ENCODE measurements at regions of chr17 and their contacts with region 1.

Region 1: GRCh38 chr17:39980351-39981206 is at the start of gene PSMD3:
- DNase-seq: peak; percentile 99
- ATAC-seq: peak; percentile 98
- H3K4me3 Mint-ChIP-seq: peak within 1 kb of the TSS; percentile 94
- H3K27ac Mint-ChIP-seq: peak within 1 kb of the TSS; percentile 90
- H3K4me1 Mint-ChIP-seq: peaks cover 31% of the 10 kb centered on the region
- H3K27me3 Mint-ChIP-seq: peaks cover 4% of the 10 kb centered on the region
- total RNA-seq, gene PSMD3: 141 to 146 TPM

Region 2: DNA sequence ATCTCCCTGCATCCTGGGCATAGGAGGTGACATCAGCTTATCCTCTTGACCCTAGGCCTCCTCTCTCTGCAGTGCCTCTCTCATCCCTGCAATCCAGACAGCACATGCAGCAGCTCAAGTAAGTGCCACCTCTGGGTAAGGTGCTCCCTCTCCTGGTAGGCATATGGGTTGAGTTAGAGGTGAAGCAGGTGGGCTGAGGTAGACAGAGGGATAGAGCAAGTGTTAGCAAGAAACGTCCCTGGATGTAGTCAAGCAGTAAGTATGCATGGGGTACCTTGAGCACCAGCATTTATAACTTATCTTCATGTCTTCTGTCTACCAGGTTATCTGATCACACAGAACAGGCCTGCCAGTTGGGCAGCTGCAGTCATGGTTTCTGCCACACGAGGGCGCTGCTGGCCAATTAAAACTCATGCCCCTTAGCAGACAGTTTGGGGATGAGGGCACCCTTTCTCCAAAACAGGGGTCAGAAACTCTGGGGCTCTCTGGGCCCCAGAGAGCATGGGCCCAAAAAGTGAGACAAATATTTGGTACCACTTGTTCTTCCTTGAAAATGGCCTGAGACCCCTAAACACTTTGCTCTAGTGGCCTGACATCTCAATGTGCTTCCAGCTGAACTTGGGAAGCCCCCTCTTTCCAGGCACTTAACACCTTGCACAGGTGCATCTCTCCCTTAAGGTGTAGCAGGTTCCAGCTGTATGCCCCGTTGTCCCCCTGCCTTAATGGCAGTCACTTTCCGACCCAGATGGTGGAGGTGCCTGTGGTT is 432.7 kb before region 1 on chr17:
- CTCF ChIA-PET with region 1: interaction called, 3 read pairs
- POLR2A ChIA-PET with region 1: no interaction called
- intact Hi-C with region 1: loop called in 1 of 2 experiments (anchors 5 kb)
- DNase-seq: peak; percentile 86
- ATAC-seq: peak; percentile 90
- H3K4me3 Mint-ChIP-seq: no peak overlapping the region
- H3K27ac Mint-ChIP-seq: no peak overlapping the region
- H3K4me1 Mint-ChIP-seq: no peaks in the 10 kb centered on the region
- H3K27me3 Mint-ChIP-seq: no peaks in the 10 kb centered on the region

Region 3: GRCh38 chr17:39687811-39688518 is 292.6 kb before region 1 on chr17 and contains the start of gene PGAP3:
- CTCF ChIA-PET with region 1: no interaction called
- POLR2A ChIA-PET with region 1: no interaction called
- intact Hi-C with region 1: loop called in 1 of 2 experiments (anchors 2 kb)
- DNase-seq: peak; percentile 92
- ATAC-seq: peak; percentile 96
- H3K4me3 Mint-ChIP-seq: peak within 1 kb of the TSS; percentile 86
- H3K27ac Mint-ChIP-seq: peak within 1 kb of the TSS; percentile 95
- H3K4me1 Mint-ChIP-seq: peaks cover 19% of the 10 kb centered on the region
- H3K27me3 Mint-ChIP-seq: no peaks in the 10 kb centered on the region
- total RNA-seq, gene PGAP3: 8.6 to 11.9 TPM

Region 4: GRCh38 chr17:39769974-39770587 is 210.5 kb before region 1 on chr17:
- CTCF ChIA-PET with region 1: no interaction called
- POLR2A ChIA-PET with region 1: no interaction called
- intact Hi-C with region 1: loop called in 1 of 2 experiments (anchors 1 kb)
- DNase-seq: peak; percentile 78
- ATAC-seq: peak; percentile 80
- H3K4me3 Mint-ChIP-seq: peak overlapping the region; percentile 7
- H3K27ac Mint-ChIP-seq: peak overlapping the region; percentile 82
- H3K4me1 Mint-ChIP-seq: peaks cover 96% of the 10 kb centered on the region
- H3K27me3 Mint-ChIP-seq: no peaks in the 10 kb centered on the region

Region 5: GRCh38 chr17:39894681-39895376 is 85.8 kb before region 1 on chr17:
- CTCF ChIA-PET with region 1: no interaction called
- POLR2A ChIA-PET with region 1: interaction called, 11 read pairs
- intact Hi-C with region 1: no loop called
- DNase-seq: no peak
- ATAC-seq: peak; percentile 74
- H3K4me3 Mint-ChIP-seq: no peak overlapping the region
- H3K27ac Mint-ChIP-seq: peak overlapping the region; percentile 59
- H3K4me1 Mint-ChIP-seq: peaks cover 8% of the 10 kb centered on the region
- H3K27me3 Mint-ChIP-seq: no peaks in the 10 kb centered on the region

Region 6: DNA sequence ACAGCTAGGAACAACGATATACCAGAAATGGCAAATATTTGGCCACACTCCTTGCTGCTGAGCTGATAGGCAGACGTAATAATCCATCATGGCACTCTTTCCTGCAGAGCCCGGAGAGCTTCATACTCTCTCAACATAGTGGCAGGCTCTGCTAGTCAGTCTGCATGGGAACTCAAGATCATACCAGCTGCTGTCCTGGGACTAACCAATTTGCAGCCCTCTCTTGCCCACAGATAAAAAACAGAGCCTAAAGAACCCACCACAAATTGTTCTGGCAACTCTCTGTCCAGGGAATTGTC is 75.6 kb before region 1 on chr17:
- CTCF ChIA-PET with region 1: no interaction called
- POLR2A ChIA-PET with region 1: no interaction called
- intact Hi-C with region 1: no loop called
- DNase-seq: no peak
- ATAC-seq: no peak
- H3K4me3 Mint-ChIP-seq: no peak overlapping the region
- H3K27ac Mint-ChIP-seq: no peak overlapping the region
- H3K4me1 Mint-ChIP-seq: peaks cover 12% of the 10 kb centered on the region
- H3K27me3 Mint-ChIP-seq: no peaks in the 10 kb centered on the region

Region 7: GRCh38 chr17:39963829-39964228 is 16.8 kb before region 1 on chr17:
- CTCF ChIA-PET with region 1: interaction called, 87 read pairs
- POLR2A ChIA-PET with region 1: interaction called, 4 read pairs
- intact Hi-C with region 1: loop called (anchors 1 kb)
- DNase-seq: peak; percentile 51
- ATAC-seq: peak; percentile 71
- H3K4me3 Mint-ChIP-seq: no peak overlapping the region
- H3K27ac Mint-ChIP-seq: peak overlapping the region; percentile 49
- H3K4me1 Mint-ChIP-seq: peaks cover 23% of the 10 kb centered on the region
- H3K27me3 Mint-ChIP-seq: peaks cover 2% of the 10 kb centered on the region

Region 8: GRCh38 chr17:40287494-40288369 is 307.2 kb after region 1 on chr17 and contains the start of gene CDC6:
- CTCF ChIA-PET with region 1: no interaction called
- POLR2A ChIA-PET with region 1: no interaction called
- intact Hi-C with region 1: loop called in 1 of 2 experiments (anchors 1 kb)
- DNase-seq: peak; percentile 99
- ATAC-seq: peak; percentile 87
- H3K4me3 Mint-ChIP-seq: peak within 1 kb of the TSS; percentile 100
- H3K27ac Mint-ChIP-seq: peak within 1 kb of the TSS; percentile 100
- H3K4me1 Mint-ChIP-seq: peaks cover 60% of the 10 kb centered on the region
- H3K27me3 Mint-ChIP-seq: no peaks in the 10 kb centered on the region
- total RNA-seq, gene CDC6: 105 to 171 TPM

Measured in activated CD4-positive, alpha-beta T cell treated with anti-CD3 and anti-CD28 coated beads for 36 hours (primary cell).